Activated naive CD4-positive, alpha-beta T cell treated with anti-CD3 and anti-CD28 coated beads, Interleukin-2, amount 10 ng/mL, durations not matched to agents 7 days and 5 days (primary cell): ENCODE measurements at regions of chr11 and their contacts with region 1.

Region 1: GRCh38 chr11:67401495-67402191 is at the start of gene PPP1CA:
- DNase-seq: peak; percentile 91
- H3K4me3 Mint-ChIP-seq: peak within 1 kb of the TSS; percentile 96
- H3K27ac Mint-ChIP-seq: peak within 1 kb of the TSS; percentile 98
- H3K4me1 Mint-ChIP-seq: peaks cover 73% of the 10 kb centered on the region
- H3K27me3 Mint-ChIP-seq: no peaks in the 10 kb centered on the region

Region 2: GRCh38 chr11:67439321-67439883 is 37.8 kb after region 1 on chr11:
- CTCF ChIA-PET with region 1: interaction called, 36 read pairs
- DNase-seq: peak; percentile 70
- H3K4me3 Mint-ChIP-seq: peak overlapping the region; percentile 100
- H3K27ac Mint-ChIP-seq: peak overlapping the region; percentile 97
- H3K4me1 Mint-ChIP-seq: peaks cover 62% of the 10 kb centered on the region
- H3K27me3 Mint-ChIP-seq: peaks cover 4% of the 10 kb centered on the region

Region 3: DNA sequence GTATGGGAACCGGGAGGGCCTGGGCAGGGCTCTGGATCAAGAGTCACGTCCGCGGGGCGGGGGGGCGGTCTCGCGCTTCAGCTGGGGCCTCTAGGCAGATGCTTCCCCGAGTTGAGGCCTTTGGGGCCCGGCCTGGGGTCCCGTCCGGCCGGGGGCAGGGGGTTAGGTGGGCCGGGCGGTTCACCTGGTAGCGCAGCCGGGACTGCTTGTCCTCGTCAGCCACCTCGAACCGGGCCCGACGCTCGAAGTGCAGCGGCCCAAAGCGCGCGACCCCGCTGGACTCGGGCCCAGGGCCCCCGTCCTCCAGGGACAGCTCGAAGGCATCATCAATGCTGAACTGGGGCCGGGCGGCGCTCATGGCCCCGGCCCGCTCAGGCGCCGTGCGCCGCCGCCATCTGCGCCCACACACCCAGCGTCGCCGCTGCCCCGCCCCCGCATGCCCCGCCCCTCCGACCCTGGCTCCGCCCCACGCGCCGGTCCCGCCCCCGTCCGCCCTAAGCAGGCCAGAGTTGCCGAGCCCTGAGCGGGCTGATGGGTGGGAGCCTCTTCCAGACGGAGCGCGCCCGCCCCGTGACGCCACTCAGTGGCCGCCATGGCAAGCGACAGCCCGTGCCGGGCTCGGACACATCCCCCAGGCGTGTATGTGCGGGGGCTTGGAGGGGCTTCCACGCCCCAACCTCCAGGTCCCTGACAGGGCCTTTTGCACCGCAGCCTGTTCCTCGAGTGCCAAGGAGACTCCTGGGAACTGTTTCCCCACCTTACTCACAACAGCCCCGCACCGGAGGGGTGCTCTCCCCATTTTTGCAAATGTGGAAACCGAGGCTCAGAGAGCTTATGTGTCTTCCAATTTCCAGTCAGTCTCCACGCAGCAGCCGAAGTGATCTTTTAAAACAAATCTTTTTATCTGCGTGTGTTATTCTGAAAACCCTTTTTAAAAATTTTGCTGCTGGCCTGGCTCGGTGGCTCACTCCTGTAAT is 67.5 kb after region 1 on chr11 and contains the start of gene TMEM134:
- CTCF ChIA-PET with region 1: interaction called, 14 read pairs
- DNase-seq: peak; percentile 92
- H3K4me3 Mint-ChIP-seq: peak within 1 kb of the TSS; percentile 87
- H3K27ac Mint-ChIP-seq: peak within 1 kb of the TSS; percentile 87
- H3K4me1 Mint-ChIP-seq: peaks cover 46% of the 10 kb centered on the region
- H3K27me3 Mint-ChIP-seq: peaks cover 5% of the 10 kb centered on the region

Region 4: GRCh38 chr11:67505605-67506396 is 104.2 kb after region 1 on chr11:
- CTCF ChIA-PET with region 1: interaction called, 14 read pairs
- DNase-seq: peak; percentile 92
- H3K4me3 Mint-ChIP-seq: peak overlapping the region; percentile 84
- H3K27ac Mint-ChIP-seq: peak overlapping the region; percentile 96
- H3K4me1 Mint-ChIP-seq: peaks cover 54% of the 10 kb centered on the region
- H3K27me3 Mint-ChIP-seq: peaks cover 14% of the 10 kb centered on the region